Thyroid gland (tissue), 4 donors: ENCODE measurements at regions of chr14 and their contacts with region 1.

Region 1: GRCh38 chr14:39258782-39259545 is 25.2 kb downstream of the MIA2 start:
- DNase-seq: no peak
- H3K4me3 ChIP-seq: no peak overlapping the region
- H3K27ac ChIP-seq: no peak overlapping the region
- H3K4me1 ChIP-seq: no peaks in the 10 kb centered on the region
- H3K27me3 ChIP-seq: no peaks in the 10 kb centered on the region
- CTCF ChIP-seq: no peak
- POLR2A ChIP-seq: no peak

Region 2: DNA sequence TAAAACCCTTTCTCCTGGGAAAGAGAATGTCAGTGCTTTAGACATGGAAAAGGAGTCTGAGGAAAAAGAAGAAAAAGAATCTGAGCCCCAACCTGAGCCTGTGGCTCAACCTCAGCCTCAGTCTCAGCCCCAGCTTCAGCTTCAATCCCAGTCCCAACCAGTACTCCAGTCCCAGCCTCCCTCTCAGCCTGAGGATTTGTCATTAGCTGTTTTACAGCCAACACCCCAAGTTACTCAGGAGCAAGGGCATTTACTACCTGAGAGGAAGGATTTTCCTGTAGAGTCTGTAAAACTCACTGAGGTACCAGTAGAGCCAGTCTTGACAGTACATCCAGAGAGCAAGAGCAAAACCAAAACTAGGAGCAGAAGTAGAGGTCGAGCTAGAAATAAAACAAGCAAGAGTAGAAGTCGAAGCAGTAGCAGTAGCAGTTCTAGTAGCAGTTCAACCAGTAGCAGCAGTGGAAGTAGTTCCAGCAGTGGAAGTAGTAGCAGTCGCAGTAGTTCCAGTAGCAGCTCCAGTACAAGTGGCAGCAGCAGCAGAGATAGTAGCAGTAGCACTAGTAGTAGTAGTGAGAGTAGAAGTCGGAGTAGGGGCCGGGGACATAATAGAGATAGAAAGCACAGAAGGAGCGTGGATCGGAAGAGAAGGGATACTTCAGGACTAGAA is 77.8 kb before region 1 on chr14:
- intact Hi-C with region 1: loop called (anchors 10 kb)
- DNase-seq: no peak
- H3K4me3 ChIP-seq: no peak overlapping the region
- H3K27ac ChIP-seq: no peak overlapping the region
- H3K4me1 ChIP-seq: peaks cover 0 to 6% of the 10 kb centered on the region in 2 donors
- H3K27me3 ChIP-seq: no peaks in the 10 kb centered on the region
- CTCF ChIP-seq: no peak
- POLR2A ChIP-seq: no peak